Mammary epithelial cell (primary cell): ENCODE measurements at regions of chr3 and their contacts with region 1.

Region 1: DNA sequence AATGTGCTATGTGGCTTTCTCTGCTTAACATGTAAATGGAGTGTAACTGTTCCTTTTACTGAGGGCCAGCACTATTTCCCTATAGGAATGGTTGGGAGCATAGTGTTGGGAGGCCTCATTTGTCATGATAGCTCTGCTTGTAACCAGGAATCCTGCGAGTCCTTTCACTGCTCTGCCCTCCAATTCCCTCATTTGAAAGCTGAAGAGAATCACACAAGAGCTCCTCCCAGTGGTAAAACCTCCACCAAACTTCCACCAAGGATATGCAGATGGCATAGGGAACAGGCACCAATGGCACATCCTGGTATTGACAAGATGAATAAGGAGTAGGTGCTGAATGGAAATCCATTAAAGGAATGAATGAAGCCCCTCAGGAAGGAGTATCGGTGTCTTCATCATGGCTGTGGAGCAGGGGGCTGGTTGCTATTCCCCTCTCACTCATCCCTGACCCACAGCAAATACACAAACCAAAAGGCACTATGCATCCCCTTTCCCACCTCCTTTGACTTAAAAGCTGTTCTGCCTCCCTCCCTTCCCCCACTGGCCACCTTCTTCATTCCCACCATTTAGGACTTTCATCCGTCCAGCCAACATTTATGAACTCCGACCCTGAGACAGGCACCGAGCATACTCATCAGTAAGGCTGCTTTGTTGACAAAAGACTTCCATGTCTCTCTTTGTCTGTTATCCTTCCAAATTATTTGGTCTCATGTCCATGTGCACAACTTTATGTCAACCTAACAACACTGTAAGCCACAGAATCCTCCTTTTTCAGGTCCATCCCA is 560.8 kb downstream of the FOXP1 start:
- DNase-seq: peak; percentile 37
- H3K4me3 ChIP-seq: no peak overlapping the region
- H3K27ac ChIP-seq: no peak overlapping the region
- H3K4me1 ChIP-seq: no peaks in the 10 kb centered on the region
- H3K27me3 ChIP-seq: no peaks in the 10 kb centered on the region
- CTCF ChIP-seq: peak in 1 of 2 donors; percentile 53

Region 2: DNA sequence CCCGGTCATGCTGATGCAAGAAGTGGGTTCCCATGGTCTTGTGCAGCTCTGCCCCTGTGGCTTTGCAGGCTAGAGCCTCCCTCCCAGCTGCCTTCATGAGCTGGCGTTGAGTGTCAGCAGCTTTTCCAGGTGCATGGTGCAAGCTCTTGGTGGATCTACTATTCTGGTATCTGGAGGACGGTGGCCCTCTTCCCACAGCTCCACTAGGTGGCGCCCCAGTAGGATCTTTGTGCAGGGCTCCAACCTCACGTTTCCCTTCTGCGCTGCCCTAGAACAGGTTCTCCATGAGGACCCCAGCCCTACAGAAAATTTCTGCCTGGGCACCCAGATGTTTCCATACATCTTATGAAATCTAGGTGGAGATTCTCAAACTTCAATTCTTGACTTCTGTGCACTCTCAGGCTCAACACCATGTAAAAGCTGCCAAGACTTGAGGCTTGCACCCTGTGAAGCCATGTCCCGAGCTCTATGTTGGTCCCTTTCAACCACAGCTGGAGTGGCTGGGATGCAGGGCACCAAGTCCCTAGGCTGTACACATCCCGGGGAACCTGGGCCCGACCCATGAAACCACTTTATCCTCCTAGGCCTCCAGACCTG is 471.9 kb before region 1 on chr3:
- CTCF ChIA-PET with region 1: no interaction called
- dilution Hi-C with region 1: no loop called
- in situ Hi-C with region 1: no loop called
- intact Hi-C with region 1: loop called (anchors 5 kb)
- DNase-seq: peak; percentile 45
- H3K4me3 ChIP-seq: no peak overlapping the region
- H3K27ac ChIP-seq: no peak overlapping the region
- H3K4me1 ChIP-seq: no peaks in the 10 kb centered on the region
- H3K27me3 ChIP-seq: peaks cover 2% of the 10 kb centered on the region
- CTCF ChIP-seq: peak; percentile 57 to 82

Region 3: DNA sequence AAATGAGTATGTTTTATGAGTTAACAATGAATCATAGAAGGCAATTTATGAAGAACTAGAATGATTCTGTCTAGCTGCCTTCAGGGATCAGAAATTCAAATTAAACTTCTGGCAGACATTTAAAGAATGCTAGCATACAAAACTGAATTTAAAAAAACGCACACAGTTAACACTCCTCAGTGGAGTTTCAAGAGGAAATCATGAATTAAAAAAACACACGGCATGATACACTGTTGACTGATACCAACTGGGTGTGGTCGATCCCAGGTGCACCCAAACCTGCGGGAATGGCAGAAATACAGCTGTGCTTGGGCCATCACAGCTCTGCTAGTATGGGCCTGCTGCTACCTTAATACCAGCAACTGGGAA is 34.8 kb after region 1 on chr3:
- CTCF ChIA-PET with region 1: no interaction called
- dilution Hi-C with region 1: loop called (anchors 5 kb)
- in situ Hi-C with region 1: no loop called
- intact Hi-C with region 1: no loop called
- DNase-seq: peak; percentile 89
- H3K4me3 ChIP-seq: peak overlapping the region in 2 of 3 experiments; percentile 16 to 43
- H3K27ac ChIP-seq: peak overlapping the region; percentile 98
- H3K4me1 ChIP-seq: peaks cover 51% of the 10 kb centered on the region
- H3K27me3 ChIP-seq: no peaks in the 10 kb centered on the region
- CTCF ChIP-seq: no peak

Region 4: DNA sequence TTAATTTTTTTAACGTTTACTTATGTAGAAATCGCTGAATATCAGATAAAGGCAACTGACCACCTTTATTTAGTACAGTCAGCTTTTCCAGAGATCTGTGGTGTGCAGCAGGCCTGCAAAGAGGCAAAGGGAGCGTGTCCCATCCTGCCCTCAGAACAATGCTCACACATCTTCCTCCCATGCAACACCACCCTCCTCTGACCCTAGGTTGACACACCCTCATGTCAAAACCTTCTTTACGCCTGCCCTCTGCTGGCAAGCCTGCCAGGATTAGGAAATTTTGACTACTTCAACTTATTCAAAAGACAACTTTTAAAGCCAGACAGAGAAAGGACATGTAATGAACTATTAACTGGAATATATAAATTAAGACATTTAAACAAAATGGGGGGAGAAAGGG is 47.1 kb after region 1 on chr3:
- CTCF ChIA-PET with region 1: no interaction called
- dilution Hi-C with region 1: no loop called
- in situ Hi-C with region 1: no loop called
- intact Hi-C with region 1: no loop called
- DNase-seq: peak; percentile 96
- H3K4me3 ChIP-seq: no peak overlapping the region
- H3K27ac ChIP-seq: peak overlapping the region; percentile 70
- H3K4me1 ChIP-seq: peaks cover 58% of the 10 kb centered on the region
- H3K27me3 ChIP-seq: no peaks in the 10 kb centered on the region
- CTCF ChIP-seq: peak; percentile 73 to 81